GM12878 (cell line): ENCODE measurements at regions of chr12 and their contacts with region 1.

Region 1: DNA sequence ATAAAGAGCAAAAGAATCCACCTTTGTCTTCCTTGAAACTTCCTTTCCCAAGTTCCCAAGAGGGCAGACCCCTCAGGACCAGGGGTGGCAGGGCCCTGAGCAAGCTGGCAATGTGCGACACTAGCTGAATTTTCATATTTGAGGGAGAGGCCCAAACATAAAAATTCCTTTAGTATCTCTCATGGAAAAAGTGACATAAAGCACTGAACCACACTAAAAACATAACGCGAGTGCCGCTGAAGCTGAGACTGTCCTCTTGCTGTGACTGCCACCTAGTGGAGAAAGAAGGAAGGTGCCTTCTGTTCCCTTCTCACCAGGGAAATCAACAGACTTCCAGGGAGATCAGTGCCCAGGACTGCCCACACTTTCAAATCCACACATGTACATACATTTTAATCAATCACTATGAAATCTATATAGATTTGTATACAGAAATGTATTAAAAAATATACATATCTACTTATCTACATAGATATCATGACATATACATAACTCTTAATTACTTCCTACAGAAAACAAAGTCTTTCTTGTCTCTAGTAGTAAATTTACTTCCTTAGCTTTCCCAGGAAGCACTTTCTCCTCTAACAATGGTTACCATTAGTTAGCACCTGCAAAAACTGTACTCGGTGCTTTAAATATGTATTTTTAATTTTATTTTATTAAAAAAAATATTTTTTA is 53.8 kb downstream of the SSH1 start:
- DNase-seq: peak; percentile 57
- ATAC-seq: peak; percentile 90
- H3K4me3 ChIP-seq: no peak overlapping the region
- H3K27ac ChIP-seq: peak overlapping the region; percentile 41
- H3K4me1 ChIP-seq: peaks cover 9% of the 10 kb centered on the region; the same call in 1 of the 2 replicates
- H3K27me3 ChIP-seq: no peaks in the 10 kb centered on the region
- CTCF ChIP-seq: peak; percentile 90 to 94 (median 91)
- EP300 ChIP-seq: no peak
- POLR2A ChIP-seq: no peak
- RAD21 ChIP-seq: peak; percentile 98

Region 2: GRCh38 chr12:108618079-108618952 is 185.3 kb before region 1 on chr12:
- CTCF ChIA-PET with region 1: interaction called, 39 read pairs
- POLR2A ChIA-PET with region 1: interaction called, 4 read pairs
- RAD21 ChIA-PET with region 1: interaction called, 7 read pairs
- SMC1A ChIA-PET with region 1: interaction called, 16 read pairs
- in situ Hi-C with region 1: no loop called
- intact Hi-C with region 1: no loop called
- DNase-seq: no peak
- ATAC-seq: peak; percentile 73
- H3K4me3 ChIP-seq: no peak overlapping the region
- H3K27ac ChIP-seq: peak overlapping the region; percentile 99
- H3K4me1 ChIP-seq: peaks cover 47% of the 10 kb centered on the region
- H3K27me3 ChIP-seq: no peaks in the 10 kb centered on the region
- CTCF ChIP-seq: peak; percentile 92 to 95 (median 94)
- EP300 ChIP-seq: no peak
- POLR2A ChIP-seq: no peak
- RAD21 ChIP-seq: peak; percentile 96

Region 3: GRCh38 chr12:108691175-108691997 is 112.2 kb before region 1 on chr12:
- CTCF ChIA-PET with region 1: interaction called, 21 read pairs
- POLR2A ChIA-PET with region 1: no interaction called
- RAD21 ChIA-PET with region 1: interaction called, 9 read pairs
- SMC1A ChIA-PET with region 1: interaction called, 22 read pairs
- in situ Hi-C with region 1: no loop called
- intact Hi-C with region 1: no loop called
- DNase-seq: peak; percentile 63
- ATAC-seq: peak; percentile 90
- H3K4me3 ChIP-seq: peak overlapping the region; percentile 62; the same call in 1 of the 2 replicates
- H3K27ac ChIP-seq: peak overlapping the region; percentile 97
- H3K4me1 ChIP-seq: peaks cover 66% of the 10 kb centered on the region
- H3K27me3 ChIP-seq: no peaks in the 10 kb centered on the region
- CTCF ChIP-seq: peak in 2 of 3 experiments; percentile 24 to 37; a peak in 2 of 6 replicates
- EP300 ChIP-seq: 0 out of 4 replicates have a peak, but pooled peaks of 1 of the 2 experiments have one; percentile 29
- POLR2A ChIP-seq: peak; percentile 27; the same call in 1 of the 2 replicates
- RAD21 ChIP-seq: no peak

Region 4: GRCh38 chr12:108768591-108769500 is 34.7 kb before region 1 on chr12:
- CTCF ChIA-PET with region 1: interaction called, 23 read pairs
- POLR2A ChIA-PET with region 1: no interaction called
- RAD21 ChIA-PET with region 1: no interaction called
- SMC1A ChIA-PET with region 1: interaction called, 3 read pairs
- in situ Hi-C with region 1: no loop called
- intact Hi-C with region 1: no loop called
- DNase-seq: peak; percentile 17
- ATAC-seq: peak; percentile 86
- H3K4me3 ChIP-seq: 0 out of 2 replicates have a peak overlapping the region, but pooled peaks have one; percentile 10
- H3K27ac ChIP-seq: no peak overlapping the region
- H3K4me1 ChIP-seq: peaks cover 29% of the 10 kb centered on the region
- H3K27me3 ChIP-seq: no peaks in the 10 kb centered on the region
- CTCF ChIP-seq: 0 out of 6 replicates have a peak, but pooled peaks of 1 of the 3 experiments have one; percentile 0
- EP300 ChIP-seq: no peak
- POLR2A ChIP-seq: no peak
- RAD21 ChIP-seq: no peak

Region 5: DNA sequence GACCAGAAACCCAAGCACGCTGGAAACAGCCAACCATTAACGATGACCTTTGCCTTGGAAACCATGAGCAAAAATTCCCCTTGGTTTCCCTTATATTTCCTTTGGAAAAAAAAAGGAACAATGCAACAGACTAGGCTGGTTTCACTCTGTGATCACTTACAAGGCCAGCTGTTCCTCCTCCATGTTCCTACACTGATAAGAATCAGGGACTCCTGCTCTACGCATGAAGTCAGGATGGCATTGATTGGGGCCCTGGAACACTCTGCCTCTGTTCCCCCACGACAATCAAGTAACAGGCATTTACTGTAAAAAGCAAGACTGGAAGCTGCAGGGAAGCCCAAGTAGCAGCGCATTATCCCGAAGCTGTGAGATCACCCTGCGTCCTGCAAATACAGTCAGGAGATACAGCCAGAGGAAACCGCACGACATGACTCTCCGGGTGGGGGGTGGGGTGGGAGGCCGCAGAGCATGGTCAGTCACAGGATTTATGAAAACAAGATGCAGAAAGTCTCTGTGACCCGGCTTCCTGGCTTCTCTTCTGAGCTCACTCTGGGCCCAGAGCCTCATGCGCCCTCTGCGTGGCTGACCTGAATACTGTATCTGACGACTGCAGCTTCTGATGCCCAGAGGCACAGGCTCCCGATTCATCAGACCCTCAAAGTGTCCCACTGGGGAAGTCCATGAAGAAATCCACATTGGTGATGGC is 22.7 kb after region 1 on chr12:
- CTCF ChIA-PET with region 1: interaction called, 33 read pairs
- POLR2A ChIA-PET with region 1: no interaction called
- RAD21 ChIA-PET with region 1: interaction called, 6 read pairs
- SMC1A ChIA-PET with region 1: interaction called, 20 read pairs
- in situ Hi-C with region 1: no loop called
- intact Hi-C with region 1: no loop called
- DNase-seq: no peak
- ATAC-seq: peak; percentile 54
- H3K4me3 ChIP-seq: peak overlapping the region; percentile 21; the same call in 1 of the 2 replicates
- H3K27ac ChIP-seq: peak overlapping the region; percentile 60
- H3K4me1 ChIP-seq: peaks cover 81% of the 10 kb centered on the region
- H3K27me3 ChIP-seq: no peaks in the 10 kb centered on the region
- CTCF ChIP-seq: 0 out of 6 replicates have a peak, but pooled peaks of 1 of the 3 experiments have one; percentile 0
- EP300 ChIP-seq: no peak
- POLR2A ChIP-seq: no peak
- RAD21 ChIP-seq: no peak

Region 6: GRCh38 chr12:108856428-108857157 is 53.0 kb after region 1 on chr12:
- CTCF ChIA-PET with region 1: interaction called, 32 read pairs
- POLR2A ChIA-PET with region 1: no interaction called
- RAD21 ChIA-PET with region 1: interaction called, 27 read pairs
- SMC1A ChIA-PET with region 1: interaction called, 22 read pairs
- in situ Hi-C with region 1: no loop called
- intact Hi-C with region 1: loop called (anchors 1 kb)
- DNase-seq: no peak
- ATAC-seq: peak; percentile 37
- H3K4me3 ChIP-seq: peak overlapping the region; percentile 93
- H3K27ac ChIP-seq: peak overlapping the region; percentile 79
- H3K4me1 ChIP-seq: peaks cover 52% of the 10 kb centered on the region
- H3K27me3 ChIP-seq: no peaks in the 10 kb centered on the region
- CTCF ChIP-seq: peak in 1 of 3 experiments; percentile 5; a peak in 1 of 6 replicates
- EP300 ChIP-seq: peak; percentile 64 to 77; a peak in 3 of 4 replicates
- POLR2A ChIP-seq: no peak
- RAD21 ChIP-seq: no peak

Region 7: GRCh38 chr12:109093022-109093918 is 289.7 kb after region 1 on chr12 and contains the start of gene ALKBH2:
- CTCF ChIA-PET with region 1: interaction called, 5 read pairs
- POLR2A ChIA-PET with region 1: no interaction called
- RAD21 ChIA-PET with region 1: no interaction called
- SMC1A ChIA-PET with region 1: interaction called, 4 read pairs
- in situ Hi-C with region 1: loop called (anchors 5 kb)
- intact Hi-C with region 1: no loop called
- DNase-seq: peak; percentile 72
- ATAC-seq: peak; percentile 73
- H3K4me3 ChIP-seq: peak within 1 kb of the TSS; percentile 77
- H3K27ac ChIP-seq: peak within 1 kb of the TSS; percentile 77
- H3K4me1 ChIP-seq: peaks cover 7% of the 10 kb centered on the region
- H3K27me3 ChIP-seq: no peaks in the 10 kb centered on the region
- CTCF ChIP-seq: peak; percentile 98 to 99 (median 98); a peak in 5 of 6 replicates
- EP300 ChIP-seq: no peak
- POLR2A ChIP-seq: peak; percentile 97
- RAD21 ChIP-seq: peak; percentile 75
- polyA plus RNA-seq, gene ALKBH2: 5.6 to 8.8 TPM